CD4-positive, alpha-beta T cell (primary cell): ENCODE measurements at regions of chr1 and their contacts with region 1.

Region 1: GRCh38 chr1:245301162-245301580 is 146.4 kb downstream of the KIF26B start:
- DNase-seq: no peak
- ATAC-seq: no peak
- H3K4me3 ChIP-seq: no peak overlapping the region
- H3K4me3 Mint-ChIP-seq: no peak overlapping the region
- H3K27ac ChIP-seq: no peak overlapping the region
- H3K27ac Mint-ChIP-seq: no peak overlapping the region
- H3K4me1 ChIP-seq: no peaks in the 10 kb centered on the region
- H3K4me1 Mint-ChIP-seq: no peaks in the 10 kb centered on the region
- H3K27me3 ChIP-seq: no peaks in the 10 kb centered on the region
- H3K27me3 Mint-ChIP-seq: no peaks in the 10 kb centered on the region
- CTCF ChIP-seq: no peak

Region 2: GRCh38 chr1:245245021-245245667 is 56.0 kb before region 1 on chr1:
- CTCF ChIA-PET with region 1: no interaction called
- POLR2A ChIA-PET with region 1: no interaction called
- intact Hi-C with region 1: loop called in 1 of 2 experiments (anchors 10 kb)
- DNase-seq: no peak
- ATAC-seq: no peak
- H3K4me3 ChIP-seq: no peak overlapping the region
- H3K4me3 Mint-ChIP-seq: no peak overlapping the region
- H3K27ac ChIP-seq: no peak overlapping the region
- H3K27ac Mint-ChIP-seq: no peak overlapping the region
- H3K4me1 ChIP-seq: no peaks in the 10 kb centered on the region
- H3K4me1 Mint-ChIP-seq: no peaks in the 10 kb centered on the region
- H3K27me3 ChIP-seq: no peaks in the 10 kb centered on the region
- H3K27me3 Mint-ChIP-seq: peaks cover 3% of the 10 kb centered on the region
- CTCF ChIP-seq: no peak